Calu3 (cell line): ENCODE measurements at regions of chrX and their contacts with region 1.

Region 1: DNA sequence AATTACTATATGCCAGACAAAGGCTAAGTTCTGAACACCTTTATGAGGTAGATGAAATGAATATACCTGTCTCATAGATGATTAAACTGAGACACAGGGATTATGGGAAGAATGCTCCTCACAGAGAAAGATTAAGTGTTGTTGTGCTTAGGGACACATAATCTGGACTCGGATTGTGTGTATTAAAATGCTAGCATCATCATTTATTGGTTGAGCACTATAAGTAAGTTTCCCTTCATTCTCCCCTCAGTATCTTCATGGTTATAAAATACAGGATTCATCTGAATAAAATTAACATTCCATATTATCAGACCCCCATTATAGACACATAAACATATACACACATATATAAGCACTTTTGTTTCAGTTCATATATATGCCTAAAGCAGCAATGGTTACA is 463.5 kb downstream of the PPP4R3C start:
- DNase-seq: no peak
- H3K4me3 Mint-ChIP-seq: no peak overlapping the region
- H3K27ac Mint-ChIP-seq: no peak overlapping the region
- H3K4me1 Mint-ChIP-seq: no peaks in the 10 kb centered on the region
- H3K27me3 Mint-ChIP-seq: no peaks in the 10 kb centered on the region
- CTCF ChIP-seq: no peak

Region 2: DNA sequence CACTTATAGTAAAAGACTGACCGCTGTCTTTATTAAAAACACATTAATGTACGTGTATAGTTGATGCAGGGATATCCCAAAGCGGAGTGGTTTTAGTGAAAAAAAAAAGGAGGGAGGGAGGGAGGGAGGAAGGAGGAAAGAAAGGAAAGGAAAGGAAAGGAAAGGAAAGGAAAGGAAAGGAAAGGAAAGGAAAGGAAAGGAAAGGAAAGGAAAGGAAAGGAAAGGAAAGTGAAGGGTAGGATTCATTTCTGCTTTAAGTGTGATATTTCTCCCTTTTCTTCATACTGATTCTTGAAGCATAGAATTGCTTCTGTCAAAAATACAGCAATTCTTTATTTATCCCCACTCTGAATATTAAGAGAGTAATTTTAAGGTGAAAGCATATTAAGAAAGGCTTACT is 41.4 kb before region 1 on chrX:
- CTCF ChIA-PET with region 1: no interaction called
- intact Hi-C with region 1: loop called (anchors 5 kb)
- DNase-seq: no peak
- H3K4me3 Mint-ChIP-seq: no peak overlapping the region
- H3K27ac Mint-ChIP-seq: no peak overlapping the region
- H3K4me1 Mint-ChIP-seq: peaks cover 9% of the 10 kb centered on the region
- H3K27me3 Mint-ChIP-seq: no peaks in the 10 kb centered on the region
- CTCF ChIP-seq: no peak

Region 3: DNA sequence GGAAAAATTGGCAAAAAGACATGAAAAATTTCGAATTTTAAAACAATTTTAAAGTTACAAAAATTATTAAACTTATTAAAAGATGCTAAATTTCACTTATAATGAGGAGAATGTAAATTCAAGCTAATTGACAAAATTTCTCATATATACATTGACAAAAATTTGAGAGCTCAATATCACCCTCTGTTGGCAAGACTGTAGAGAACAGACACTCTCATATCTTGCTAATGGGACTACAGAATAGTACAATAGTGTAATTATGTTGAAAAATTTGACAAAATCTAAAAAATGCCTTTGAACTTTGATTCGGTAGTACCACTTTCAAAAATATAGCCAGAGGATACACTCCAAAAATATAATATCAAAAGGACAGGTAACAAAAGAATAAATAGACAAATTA is 620.3 kb after region 1 on chrX:
- CTCF ChIA-PET with region 1: no interaction called
- intact Hi-C with region 1: no loop called
- DNase-seq: peak; percentile 6
- H3K4me3 Mint-ChIP-seq: no peak overlapping the region
- H3K27ac Mint-ChIP-seq: no peak overlapping the region
- H3K4me1 Mint-ChIP-seq: peaks cover 8% of the 10 kb centered on the region
- H3K27me3 Mint-ChIP-seq: no peaks in the 10 kb centered on the region
- CTCF ChIP-seq: peak; percentile 26